Stomach (tissue), 19 donors: ENCODE measurements at regions of chr11 and their contacts with region 1.

Region 1: GRCh38 chr11:117946842-117947526 is 17.8 kb upstream of the TMPRSS13 start:
- DNase-seq: peak; percentile 90 to 96
- H3K4me3 ChIP-seq: no peak overlapping the region
- H3K27ac ChIP-seq: no peak overlapping the region
- H3K4me1 ChIP-seq: peaks cover 0 to 13% (median 6%) of the 10 kb centered on the region in 4 donors
- H3K27me3 ChIP-seq: peaks cover 0 to 24% (median 0%) of the 10 kb centered on the region in 3 donors
- CTCF ChIP-seq: peak in 6 of 7 experiments; percentile 91 to 97 (median 94)
- EP300 ChIP-seq: no peak
- POLR2A ChIP-seq: no peak

Region 2: DNA sequence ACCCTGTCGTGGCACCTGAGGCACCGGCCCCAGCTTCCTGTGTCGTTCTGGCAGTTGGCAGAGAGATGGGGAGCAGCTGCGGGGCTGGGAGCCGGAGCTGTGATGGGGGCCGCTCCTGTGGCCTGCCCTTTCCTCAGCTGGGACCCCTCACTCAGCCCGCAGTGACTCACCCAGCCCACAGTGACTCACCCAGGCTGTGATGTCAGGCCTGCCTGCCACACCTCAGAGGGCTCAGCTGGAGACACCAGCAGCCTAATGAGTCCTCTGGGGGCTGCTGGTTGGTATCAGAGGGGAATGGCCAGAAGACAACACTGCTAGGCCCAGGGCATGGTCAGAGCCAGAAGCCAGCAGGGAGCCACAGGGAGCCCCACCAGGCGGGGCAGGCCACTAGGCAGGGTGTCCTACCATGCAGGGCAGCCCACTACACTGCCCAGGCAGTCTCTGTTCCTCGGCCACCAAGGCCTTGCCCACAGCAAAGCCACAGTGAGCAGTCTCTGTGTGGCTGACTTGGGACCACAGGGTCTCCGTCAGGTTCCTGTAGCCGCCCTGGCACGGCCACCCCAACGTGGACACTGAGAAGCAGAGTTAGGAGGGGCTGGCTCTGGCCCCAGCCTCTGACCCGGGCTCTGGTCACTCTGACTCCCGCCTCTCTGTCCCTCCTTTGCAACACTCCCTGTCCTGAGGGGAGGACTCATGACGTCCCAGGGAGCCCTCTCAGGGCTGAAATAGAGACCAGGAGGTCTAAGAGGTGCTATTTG is 118.2 kb before region 1 on chr11:
- intact Hi-C with region 1: no loop called
- DNase-seq: peak; percentile 42 to 86
- H3K4me3 ChIP-seq: no peak overlapping the region
- H3K27ac ChIP-seq: peak overlapping the region; percentile 39 to 73 (median 59)
- H3K4me1 ChIP-seq: peaks cover 19 to 67% (median 51%) of the 10 kb centered on the region in 4 donors
- H3K27me3 ChIP-seq: peaks cover 0 to 15% (median 0%) of the 10 kb centered on the region in 3 donors
- CTCF ChIP-seq: no peak
- EP300 ChIP-seq: no peak
- POLR2A ChIP-seq: no peak

Region 3: GRCh38 chr11:117849781-117850414 is 97.1 kb before region 1 on chr11:
- intact Hi-C with region 1: loop called (anchors 5 kb)
- DNase-seq: peak in 1 of 2 donors; percentile 16
- H3K4me3 ChIP-seq: no peak overlapping the region
- H3K27ac ChIP-seq: no peak overlapping the region
- H3K4me1 ChIP-seq: peaks cover 0 to 11% (median 0%) of the 10 kb centered on the region in 4 donors
- H3K27me3 ChIP-seq: peaks cover 0 to 3% (median 0%) of the 10 kb centered on the region in 3 donors
- CTCF ChIP-seq: no peak
- EP300 ChIP-seq: no peak
- POLR2A ChIP-seq: no peak

Region 4: GRCh38 chr11:117985953-117986887 is 39.2 kb after region 1 on chr11 and contains the start of gene IL10RA:
- intact Hi-C with region 1: no loop called
- DNase-seq: peak; percentile 84 to 95
- H3K4me3 ChIP-seq: peak within 1 kb of the TSS; percentile 50 to 62 (median 56)
- H3K27ac ChIP-seq: peak within 1 kb of the TSS; percentile 79 to 90 (median 81)
- H3K4me1 ChIP-seq: peaks cover 11 to 33% (median 15%) of the 10 kb centered on the region in 4 donors
- H3K27me3 ChIP-seq: peaks cover 0 to 32% (median 12%) of the 10 kb centered on the region in 3 donors
- CTCF ChIP-seq: no peak
- EP300 ChIP-seq: no peak
- POLR2A ChIP-seq: no peak
- total RNA-seq, gene IL10RA: 5.4 to 190 (median 18.7) TPM

Region 5: DNA sequence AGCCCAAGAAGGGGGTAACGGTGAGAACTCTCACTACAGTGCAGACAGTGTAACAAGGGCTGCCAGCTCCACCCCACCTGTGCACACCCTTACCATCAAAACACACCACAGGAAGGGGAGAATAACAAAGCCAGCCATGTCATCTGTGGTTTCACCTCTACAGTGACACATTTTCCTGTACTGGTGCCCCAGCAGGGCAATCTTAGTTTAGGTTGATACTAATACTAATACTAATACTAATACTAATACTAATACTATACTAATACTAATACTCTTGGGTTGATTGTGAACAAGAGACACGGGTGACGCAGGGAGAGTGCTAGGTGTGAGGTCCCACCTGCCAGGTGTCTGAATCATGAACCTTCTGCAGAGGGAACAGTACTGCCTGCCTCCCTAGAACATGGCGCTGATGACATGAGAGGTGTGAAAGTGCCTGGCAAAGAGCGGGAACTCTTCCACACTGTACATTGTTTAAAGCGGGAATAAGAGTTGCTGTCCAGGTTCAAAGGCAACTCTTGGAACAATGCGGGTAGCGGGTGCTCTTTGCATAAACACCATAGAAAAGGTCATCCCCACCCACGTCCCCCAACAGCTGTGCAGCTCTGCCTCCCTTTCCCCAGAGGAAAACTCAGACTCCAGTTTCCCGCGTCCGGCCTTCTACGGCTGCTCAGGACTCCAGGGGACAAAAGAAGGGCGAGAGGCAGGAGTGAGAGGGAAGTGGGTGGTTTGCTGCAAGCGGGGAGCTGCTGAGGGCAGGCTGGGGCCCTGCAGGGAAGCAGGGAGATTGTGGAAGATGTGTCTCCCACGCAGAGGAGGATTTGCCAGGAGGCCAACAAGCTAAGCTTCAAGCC is 104.9 kb after region 1 on chr11:
- intact Hi-C with region 1: loop called (anchors 10 kb)
- DNase-seq: peak; percentile 27 to 63
- H3K4me3 ChIP-seq: no peak overlapping the region
- H3K27ac ChIP-seq: no peak overlapping the region
- H3K4me1 ChIP-seq: peaks cover 0 to 6% (median 0%) of the 10 kb centered on the region in 4 donors
- H3K27me3 ChIP-seq: no peaks in the 10 kb centered on the region
- CTCF ChIP-seq: no peak
- EP300 ChIP-seq: no peak
- POLR2A ChIP-seq: no peak